ENCODE measurements at regions of chr5 and their contacts with region 1.

Region 1: GRCh38 chr5:174951146-174951780 is 226.9 kb downstream of the MSX2 start:
- DNase-seq: peak in 1 of 2 donors; percentile 52
- ATAC-seq: peak; percentile 72
- H3K4me3 ChIP-seq: no peak overlapping the region
- H3K27ac ChIP-seq: no peak overlapping the region
- H3K4me1 ChIP-seq: peaks cover 0 to 3% of the 10 kb centered on the region in 2 donors
- H3K27me3 ChIP-seq: no peaks in the 10 kb centered on the region

Region 2: DNA sequence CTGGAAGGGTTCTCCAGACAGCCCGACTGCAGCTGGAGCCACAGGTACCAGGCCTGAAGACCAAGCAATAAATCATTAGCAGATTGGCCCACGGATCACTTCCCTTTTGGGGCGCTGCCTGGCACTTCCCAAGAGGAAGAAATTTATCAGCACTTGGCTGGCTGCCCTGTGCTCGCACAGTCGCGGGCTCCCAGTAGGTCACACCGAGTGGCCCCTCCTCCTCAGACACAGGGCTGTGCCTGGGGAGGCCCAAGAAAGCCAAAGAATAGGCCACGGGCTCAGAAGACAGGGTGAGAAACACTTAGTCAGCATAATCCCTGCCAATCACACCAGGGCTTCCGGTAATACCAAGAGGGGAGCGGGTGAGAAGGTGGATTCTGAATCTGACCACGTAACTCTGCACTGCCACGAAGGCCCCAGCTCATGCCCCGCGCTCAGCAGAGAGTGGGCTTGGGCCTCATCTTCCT is 342.6 kb before region 1 on chr5:
- intact Hi-C with region 1: no loop called
- DNase-seq: peak; percentile 82 to 86
- ATAC-seq: peak; percentile 81
- H3K4me3 ChIP-seq: no peak overlapping the region
- H3K27ac ChIP-seq: no peak overlapping the region
- H3K4me1 ChIP-seq: no peaks in the 10 kb centered on the region
- H3K27me3 ChIP-seq: no peaks in the 10 kb centered on the region

Region 3: GRCh38 chr5:174910245-174910737 is 41.0 kb before region 1 on chr5:
- intact Hi-C with region 1: no loop called
- DNase-seq: peak; percentile 68 to 87
- ATAC-seq: peak; percentile 84
- H3K4me3 ChIP-seq: no peak overlapping the region
- H3K27ac ChIP-seq: no peak overlapping the region
- H3K4me1 ChIP-seq: no peaks in the 10 kb centered on the region
- H3K27me3 ChIP-seq: no peaks in the 10 kb centered on the region

Region 4: DNA sequence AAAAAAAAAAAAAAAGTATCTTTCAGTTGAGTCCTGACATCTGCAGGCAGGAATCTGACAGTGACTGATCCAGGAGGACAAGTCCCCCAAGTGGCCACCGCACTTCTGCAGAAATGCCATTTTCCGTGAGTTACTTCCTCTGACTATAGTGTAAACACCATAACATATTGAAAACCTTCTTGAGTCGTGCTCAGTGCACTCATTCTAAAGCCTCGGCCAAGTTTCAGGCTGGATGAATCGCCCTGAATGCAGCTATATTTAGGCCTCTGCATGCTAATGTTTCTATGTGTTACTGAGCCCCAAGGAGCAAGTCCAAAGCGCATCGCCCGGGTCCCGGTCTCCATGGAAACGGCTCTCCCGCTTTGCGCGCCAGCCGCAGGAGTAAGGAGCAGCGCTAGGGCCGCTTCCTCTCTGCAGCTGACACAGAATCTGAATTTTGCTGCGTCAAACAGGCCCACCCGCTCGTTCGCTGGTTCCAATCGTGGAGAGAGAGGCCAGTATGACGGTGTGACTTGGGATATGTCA is 108.5 kb after region 1 on chr5:
- intact Hi-C with region 1: loop called in 1 of 2 experiments (anchors 10 kb)
- DNase-seq: peak; percentile 76 to 89
- ATAC-seq: peak; percentile 63
- H3K4me3 ChIP-seq: peak overlapping the region; percentile 2 to 40
- H3K27ac ChIP-seq: no peak overlapping the region
- H3K4me1 ChIP-seq: no peaks in the 10 kb centered on the region
- H3K27me3 ChIP-seq: no peaks in the 10 kb centered on the region

Region 5: DNA sequence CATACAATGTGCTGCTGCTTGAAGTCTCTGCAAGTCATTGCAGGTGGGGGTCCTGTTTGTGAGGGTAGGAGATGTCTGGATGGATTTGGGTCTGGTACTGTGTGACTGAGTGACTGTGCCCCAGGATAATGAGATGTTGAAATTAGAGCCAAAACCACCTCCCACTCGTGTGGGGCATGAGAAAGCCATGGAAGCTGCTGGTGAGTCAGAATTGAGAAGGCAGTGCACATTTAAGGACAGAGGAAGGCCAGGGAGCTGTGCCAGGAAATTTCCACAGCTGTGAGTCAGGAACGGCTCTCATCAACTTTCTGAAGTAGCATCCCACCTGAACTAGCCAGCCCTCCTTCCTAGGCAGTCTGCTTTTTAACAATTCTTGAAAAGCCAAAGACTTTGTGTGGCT is 262.9 kb after region 1 on chr5:
- intact Hi-C with region 1: loop called in 1 of 2 experiments (anchors 10 kb)
- DNase-seq: peak; percentile 89 to 91
- ATAC-seq: no peak
- H3K4me3 ChIP-seq: no peak overlapping the region
- H3K27ac ChIP-seq: peak overlapping the region in 1 of 2 donors; percentile 29
- H3K4me1 ChIP-seq: peaks cover 5 to 9% of the 10 kb centered on the region in 2 donors
- H3K27me3 ChIP-seq: no peaks in the 10 kb centered on the region

Region 6: GRCh38 chr5:175444060-175444904 is 493.0 kb after region 1 on chr5 and contains the start of gene DRD1:
- intact Hi-C with region 1: loop called (anchors 1 kb)
- DNase-seq: peak; percentile 56 to 88
- ATAC-seq: peak; percentile 78
- H3K4me3 ChIP-seq: peak within 1 kb of the TSS; percentile 1 to 16
- H3K27ac ChIP-seq: no peak within 1 kb of the TSS
- H3K4me1 ChIP-seq: no peaks in the 10 kb centered on the region
- H3K27me3 ChIP-seq: no peaks in the 10 kb centered on the region
- total RNA-seq, gene DRD1: 0.45 to 0.62 TPM

Region 7: DNA sequence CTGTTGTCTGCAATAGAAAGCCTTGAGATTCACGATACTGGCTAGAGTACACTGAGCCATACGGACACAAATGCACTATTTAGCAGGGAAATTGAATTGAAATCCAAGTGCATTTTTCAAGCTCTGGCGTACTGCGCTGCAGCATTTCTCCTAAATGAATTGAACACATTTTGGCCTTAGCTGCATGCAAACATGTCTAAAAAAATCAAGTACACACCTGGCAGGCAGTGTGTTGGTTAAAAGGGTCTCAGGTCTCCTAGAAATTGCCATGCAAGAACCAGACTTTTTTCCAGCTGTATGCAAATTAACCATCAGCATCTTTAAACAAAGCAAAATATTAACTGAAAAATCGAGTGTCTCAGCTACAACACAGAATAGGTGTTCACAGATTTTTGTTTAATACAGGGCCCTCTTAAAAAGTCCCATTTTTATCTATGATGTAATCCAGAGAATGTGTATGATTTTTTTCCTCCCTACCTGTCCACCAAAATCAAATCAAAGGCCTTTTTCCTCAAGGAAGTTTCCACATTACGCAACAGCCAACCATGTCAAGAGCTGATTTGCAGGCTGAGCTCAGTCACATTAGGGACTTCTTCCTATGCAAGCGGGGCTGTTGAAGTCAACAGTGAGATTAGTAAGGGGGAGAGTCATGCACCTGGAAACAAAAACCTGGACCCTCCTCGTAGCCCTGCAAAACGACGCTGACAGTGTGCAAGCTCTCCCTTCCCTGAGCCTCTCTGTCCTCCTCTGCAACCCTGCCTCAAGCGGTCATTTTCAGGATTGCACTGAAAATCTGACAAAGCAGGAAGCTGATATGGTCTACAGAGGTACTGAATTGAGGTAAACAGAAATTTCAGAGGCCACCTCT is 513.0 kb after region 1 on chr5:
- intact Hi-C with region 1: loop called in 1 of 2 experiments (anchors 5 kb)
- DNase-seq: no peak
- ATAC-seq: no peak
- H3K4me3 ChIP-seq: no peak overlapping the region
- H3K27ac ChIP-seq: no peak overlapping the region
- H3K4me1 ChIP-seq: no peaks in the 10 kb centered on the region
- H3K27me3 ChIP-seq: peaks cover 0 to 2% of the 10 kb centered on the region in 2 donors